Activated CD4-positive, alpha-beta T cell treated with anti-CD3 and anti-CD28 coated beads for 36 hours (primary cell): ENCODE measurements at regions of chr16 and their contacts with region 1.

Region 1: DNA sequence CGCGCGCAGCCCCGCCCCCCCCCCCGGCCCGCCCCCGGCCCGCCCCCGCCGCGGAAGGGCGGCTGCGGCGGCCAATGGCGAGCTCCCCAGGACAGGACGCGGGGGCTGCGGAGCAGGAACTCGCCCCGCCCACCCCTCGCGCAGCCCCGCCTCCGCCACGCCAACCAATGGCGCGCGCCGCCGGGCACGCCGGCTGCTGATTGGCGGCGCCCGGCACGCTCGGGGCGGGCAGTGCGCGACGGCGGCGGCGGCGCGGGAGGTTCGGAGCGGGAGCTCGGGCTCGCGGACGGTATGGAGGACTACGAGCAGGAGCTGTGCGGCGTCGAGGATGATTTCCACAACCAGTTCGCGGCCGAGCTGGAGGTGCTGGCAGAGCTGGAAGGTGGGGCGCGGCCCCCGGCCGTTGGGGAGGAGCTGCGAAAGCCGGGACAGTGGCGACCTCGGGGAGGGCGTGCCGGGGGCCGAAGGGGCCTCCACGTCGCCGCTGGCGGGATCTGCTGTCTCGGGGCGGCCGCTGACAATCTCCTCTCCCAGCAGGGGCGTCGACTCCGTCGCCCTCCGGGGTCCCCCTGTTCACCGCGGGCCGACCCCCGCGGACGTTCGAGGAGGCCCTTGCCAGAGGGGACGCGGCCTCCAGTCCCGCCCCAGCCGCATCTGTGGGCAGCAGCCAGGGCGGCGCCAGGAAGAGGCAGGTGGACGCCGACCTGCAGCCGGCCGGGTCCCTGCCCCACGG is at the start of gene CHTF18:
- DNase-seq: peak; percentile 97
- ATAC-seq: peak; percentile 98
- H3K4me3 Mint-ChIP-seq: peak within 1 kb of the TSS; percentile 88
- H3K27ac Mint-ChIP-seq: peak within 1 kb of the TSS; percentile 78
- H3K4me1 Mint-ChIP-seq: peaks cover 13% of the 10 kb centered on the region
- H3K27me3 Mint-ChIP-seq: no peaks in the 10 kb centered on the region
- total RNA-seq, gene CHTF18: 82.2 to 105 TPM

Region 2: DNA sequence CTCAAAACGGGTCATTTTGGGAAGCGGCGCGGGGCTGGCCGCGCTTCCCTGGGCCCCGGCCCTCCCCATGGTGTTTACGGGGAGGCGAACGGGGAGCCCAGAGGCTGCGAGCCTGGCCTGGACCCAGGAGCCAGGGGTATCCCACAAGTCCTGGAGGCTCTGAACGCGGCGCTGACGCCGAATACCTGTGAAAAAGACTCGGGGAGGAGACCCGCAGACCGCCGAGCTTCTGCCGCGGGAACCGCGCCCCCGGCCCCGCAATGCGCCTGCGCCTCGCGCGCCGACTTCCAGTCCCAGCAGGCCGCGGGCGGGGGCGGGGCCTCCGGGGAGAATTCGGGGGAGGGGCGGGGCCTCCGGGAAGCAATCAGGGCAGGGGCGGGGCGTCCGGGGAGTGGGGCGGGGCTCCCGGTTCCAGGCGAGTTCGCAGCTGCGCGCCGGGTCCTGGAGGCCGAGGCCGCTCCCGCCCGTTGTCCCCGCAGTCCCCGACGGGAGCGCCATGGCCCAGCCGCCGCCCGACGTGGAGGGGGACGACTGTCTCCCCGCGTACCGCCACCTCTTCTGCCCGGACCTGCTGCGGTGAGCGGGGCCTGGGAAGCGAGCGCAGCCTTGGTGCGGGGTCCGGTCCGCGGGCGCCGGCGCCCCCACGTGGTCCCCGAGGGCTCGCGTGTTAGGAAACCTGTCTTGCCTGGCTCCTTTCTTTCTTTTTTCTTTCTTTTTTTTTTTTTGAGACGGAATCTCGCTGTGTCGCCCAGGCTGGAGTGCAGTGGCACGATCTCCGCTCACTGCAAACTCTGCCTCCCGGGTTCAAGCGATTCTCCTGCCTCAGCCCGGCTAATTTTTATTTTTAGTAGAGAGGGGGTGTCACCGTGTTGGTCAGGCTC is 386.9 kb before region 1 on chr16 and contains the start of gene DECR2:
- CTCF ChIA-PET with region 1: no interaction called
- POLR2A ChIA-PET with region 1: no interaction called
- intact Hi-C with region 1: loop called in 1 of 2 experiments (anchors 1 kb)
- DNase-seq: peak; percentile 100
- ATAC-seq: peak; percentile 87
- H3K4me3 Mint-ChIP-seq: peak within 1 kb of the TSS; percentile 82
- H3K27ac Mint-ChIP-seq: peak within 1 kb of the TSS; percentile 87
- H3K4me1 Mint-ChIP-seq: peaks cover 10% of the 10 kb centered on the region
- H3K27me3 Mint-ChIP-seq: no peaks in the 10 kb centered on the region
- total RNA-seq, gene DECR2: 11.5 to 13.0 TPM

Region 3: DNA sequence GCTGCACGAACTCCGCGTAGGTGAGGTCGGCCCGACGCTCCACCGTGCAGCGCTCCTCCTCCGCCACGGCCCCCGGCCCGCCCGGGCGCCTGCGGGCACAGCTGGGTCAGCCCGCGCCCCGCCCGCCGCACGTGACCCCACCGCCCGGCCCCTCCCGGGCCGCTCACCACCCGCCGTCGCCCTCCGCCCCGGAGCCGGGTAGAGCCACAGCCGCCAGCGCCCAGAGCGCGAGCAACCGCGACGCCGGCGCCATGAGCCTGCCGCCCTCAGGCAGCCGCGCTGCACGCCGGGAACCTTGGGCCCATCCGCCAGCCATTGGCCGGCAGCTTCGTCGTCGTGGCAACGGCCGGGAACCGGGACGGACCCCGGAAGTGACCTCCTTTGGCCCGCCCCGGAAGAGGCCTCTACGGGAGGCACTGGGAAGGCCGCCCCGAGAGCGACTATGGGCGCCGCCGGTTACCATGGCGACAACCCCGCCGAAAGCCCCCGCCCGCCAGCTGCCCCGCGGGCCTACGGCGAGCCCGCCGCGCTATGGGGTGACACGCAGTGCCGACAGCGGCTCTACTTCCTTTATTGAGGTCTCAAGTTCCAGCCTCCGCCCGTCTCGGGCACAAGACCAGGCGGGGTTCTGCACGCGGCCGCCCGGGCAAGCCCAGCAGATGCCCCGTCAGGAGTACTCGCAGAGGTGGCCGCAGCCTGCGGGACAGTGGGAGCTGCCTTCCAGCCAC is 104.3 kb before region 1 on chr16 and contains the start of gene JMJD8:
- CTCF ChIA-PET with region 1: no interaction called
- POLR2A ChIA-PET with region 1: interaction called, 4 read pairs
- intact Hi-C with region 1: loop called in 1 of 2 experiments (anchors 1 kb)
- DNase-seq: peak; percentile 99
- ATAC-seq: peak; percentile 80
- H3K4me3 Mint-ChIP-seq: peak within 1 kb of the TSS; percentile 76
- H3K27ac Mint-ChIP-seq: peak within 1 kb of the TSS; percentile 58
- H3K4me1 Mint-ChIP-seq: peaks cover 40% of the 10 kb centered on the region
- H3K27me3 Mint-ChIP-seq: no peaks in the 10 kb centered on the region
- total RNA-seq, gene JMJD8: 26.1 to 31.4 TPM

Region 4: GRCh38 chr16:714558-715476 is 73.7 kb before region 1 on chr16 and contains the start of gene METRN:
- CTCF ChIA-PET with region 1: interaction called, 55 read pairs
- POLR2A ChIA-PET with region 1: no interaction called
- intact Hi-C with region 1: loop called (anchors 1 kb)
- DNase-seq: peak; percentile 95
- ATAC-seq: peak; percentile 85
- H3K4me3 Mint-ChIP-seq: peak within 1 kb of the TSS; percentile 56
- H3K27ac Mint-ChIP-seq: no peak within 1 kb of the TSS
- H3K4me1 Mint-ChIP-seq: peaks cover 8% of the 10 kb centered on the region
- H3K27me3 Mint-ChIP-seq: peaks cover 14% of the 10 kb centered on the region
- total RNA-seq, gene METRN: 11.1 to 13.3 TPM

Region 5: GRCh38 chr16:740764-741505 is 47.6 kb before region 1 on chr16 and contains the start of gene CIAO3:
- CTCF ChIA-PET with region 1: interaction called, 4 read pairs
- POLR2A ChIA-PET with region 1: interaction called, 4 read pairs
- intact Hi-C with region 1: loop called (anchors 1 kb)
- DNase-seq: peak; percentile 96
- ATAC-seq: peak; percentile 72
- H3K4me3 Mint-ChIP-seq: peak within 1 kb of the TSS; percentile 76
- H3K27ac Mint-ChIP-seq: peak within 1 kb of the TSS; percentile 51
- H3K4me1 Mint-ChIP-seq: peaks cover 22% of the 10 kb centered on the region
- H3K27me3 Mint-ChIP-seq: no peaks in the 10 kb centered on the region
- total RNA-seq, gene CIAO3: 28.3 to 31.9 TPM

Region 6: DNA sequence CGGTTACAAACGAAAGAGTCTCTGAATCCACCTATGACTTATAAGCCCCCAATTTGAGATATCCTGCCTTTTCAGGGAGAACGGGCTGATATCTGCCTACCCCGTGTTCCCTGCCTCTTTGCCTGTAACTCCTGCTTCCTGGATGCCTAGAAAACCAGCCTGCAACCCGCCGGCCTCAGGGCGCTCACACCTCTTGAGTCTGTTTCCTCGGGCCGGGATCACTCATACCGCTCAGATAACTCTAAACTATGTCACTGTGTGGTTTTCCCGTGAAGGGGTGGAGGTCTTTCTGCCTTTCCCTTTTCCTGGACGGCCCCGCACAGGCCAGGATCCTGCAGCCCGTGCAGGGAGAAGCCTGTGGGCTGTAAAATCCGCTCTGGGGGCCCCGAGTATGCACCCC is 10.7 kb before region 1 on chr16:
- CTCF ChIA-PET with region 1: no interaction called
- POLR2A ChIA-PET with region 1: no interaction called
- intact Hi-C with region 1: no loop called
- DNase-seq: no peak
- ATAC-seq: no peak
- H3K4me3 Mint-ChIP-seq: no peak overlapping the region
- H3K27ac Mint-ChIP-seq: no peak overlapping the region
- H3K4me1 Mint-ChIP-seq: no peaks in the 10 kb centered on the region
- H3K27me3 Mint-ChIP-seq: peaks cover 2% of the 10 kb centered on the region

Region 7: GRCh38 chr16:970766-971581 is 182.4 kb after region 1 on chr16 and contains the start of gene LMF1:
- CTCF ChIA-PET with region 1: no interaction called
- POLR2A ChIA-PET with region 1: no interaction called
- intact Hi-C with region 1: loop called in 1 of 2 experiments (anchors 1 kb)
- DNase-seq: peak; percentile 98
- ATAC-seq: peak; percentile 93
- H3K4me3 Mint-ChIP-seq: peak within 1 kb of the TSS; percentile 76
- H3K27ac Mint-ChIP-seq: peak within 1 kb of the TSS; percentile 78
- H3K4me1 Mint-ChIP-seq: peaks cover 15% of the 10 kb centered on the region
- H3K27me3 Mint-ChIP-seq: no peaks in the 10 kb centered on the region
- total RNA-seq, gene LMF1: 9.5 to 12.2 TPM

Region 8: GRCh38 chr16:1492923-1493745 is 704.6 kb after region 1 on chr16 and contains the start of gene TELO2:
- CTCF ChIA-PET with region 1: no interaction called
- POLR2A ChIA-PET with region 1: no interaction called
- intact Hi-C with region 1: no loop called
- DNase-seq: peak; percentile 94
- ATAC-seq: peak; percentile 89
- H3K4me3 Mint-ChIP-seq: peak within 1 kb of the TSS; percentile 92
- H3K27ac Mint-ChIP-seq: peak within 1 kb of the TSS; percentile 97
- H3K4me1 Mint-ChIP-seq: peaks cover 15% of the 10 kb centered on the region
- H3K27me3 Mint-ChIP-seq: no peaks in the 10 kb centered on the region
- total RNA-seq, gene TELO2: 48.1 to 60.0 TPM